Esophagus squamous epithelium (tissue), 5 donors: ENCODE measurements at regions of chr3 and their contacts with region 1.

Region 1: DNA sequence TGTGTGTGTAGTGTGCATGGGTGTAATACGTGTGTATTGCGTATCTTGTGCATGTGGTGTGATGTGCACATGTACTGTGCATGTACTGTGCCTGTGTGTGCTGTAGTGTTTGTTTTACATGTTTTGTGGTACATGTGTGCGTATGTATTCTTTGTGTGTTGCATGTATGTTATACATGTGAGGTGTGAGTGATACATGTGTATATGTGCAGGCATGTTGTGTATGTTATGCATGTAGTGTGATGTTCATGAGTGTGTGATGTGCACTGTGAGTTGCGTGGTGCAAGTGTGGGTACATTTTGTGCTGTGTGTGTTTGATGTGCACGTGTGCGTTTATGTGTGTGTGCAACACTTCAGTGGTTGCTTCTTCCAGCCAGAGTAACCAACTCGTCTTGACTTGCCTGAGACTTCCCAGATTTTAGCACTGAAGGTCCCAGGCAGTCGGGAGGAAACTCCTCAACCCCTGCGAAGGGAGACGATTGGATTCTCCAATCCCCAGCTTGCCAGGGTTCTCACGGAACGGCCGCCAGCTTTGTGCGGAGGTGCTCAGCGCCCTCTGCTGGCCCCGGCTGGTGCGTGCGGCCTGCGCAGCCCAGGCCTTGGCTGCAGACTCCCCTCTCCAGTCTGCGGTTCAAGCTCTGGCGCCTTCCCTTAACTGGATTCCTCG is 3.6 kb downstream of the GALNT15 start:
- DNase-seq: no peak
- H3K4me3 ChIP-seq: peak overlapping the region in 3 of 4 donors; percentile 39 to 66 (median 46)
- H3K27ac ChIP-seq: peak overlapping the region in 3 of 4 donors; percentile 10 to 87 (median 48)
- H3K4me1 ChIP-seq: peaks cover 0 to 55% (median 22%) of the 10 kb centered on the region in 3 donors
- H3K27me3 ChIP-seq: peaks cover 0 to 49% (median 0%) of the 10 kb centered on the region in 4 donors
- CTCF ChIP-seq: peak; percentile 60 to 97 (median 94)
- POLR2A ChIP-seq: no peak

Region 2: DNA sequence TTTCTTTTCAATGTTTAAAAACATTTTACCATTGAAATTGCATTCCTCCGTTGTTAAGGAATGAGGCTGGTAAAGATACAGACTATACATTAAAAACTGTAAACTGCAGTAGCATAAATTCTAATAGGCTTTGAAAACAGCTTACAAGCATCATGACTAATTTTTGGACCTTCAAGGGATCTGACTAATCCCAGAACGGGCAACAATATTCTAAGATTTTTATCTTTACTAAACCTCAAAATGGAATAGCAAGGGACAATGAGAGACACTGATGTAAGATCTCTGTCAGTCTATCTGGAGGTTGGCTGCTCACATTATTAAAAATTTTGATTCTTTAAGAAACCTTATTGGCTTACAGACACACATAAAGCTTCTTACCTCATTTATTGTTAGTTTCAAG is 501.8 kb before region 1 on chr3:
- intact Hi-C with region 1: no loop called
- DNase-seq: no peak
- H3K4me3 ChIP-seq: no peak overlapping the region
- H3K27ac ChIP-seq: no peak overlapping the region
- H3K4me1 ChIP-seq: no peaks in the 10 kb centered on the region
- H3K27me3 ChIP-seq: no peaks in the 10 kb centered on the region
- CTCF ChIP-seq: no peak
- POLR2A ChIP-seq: no peak

Region 3: DNA sequence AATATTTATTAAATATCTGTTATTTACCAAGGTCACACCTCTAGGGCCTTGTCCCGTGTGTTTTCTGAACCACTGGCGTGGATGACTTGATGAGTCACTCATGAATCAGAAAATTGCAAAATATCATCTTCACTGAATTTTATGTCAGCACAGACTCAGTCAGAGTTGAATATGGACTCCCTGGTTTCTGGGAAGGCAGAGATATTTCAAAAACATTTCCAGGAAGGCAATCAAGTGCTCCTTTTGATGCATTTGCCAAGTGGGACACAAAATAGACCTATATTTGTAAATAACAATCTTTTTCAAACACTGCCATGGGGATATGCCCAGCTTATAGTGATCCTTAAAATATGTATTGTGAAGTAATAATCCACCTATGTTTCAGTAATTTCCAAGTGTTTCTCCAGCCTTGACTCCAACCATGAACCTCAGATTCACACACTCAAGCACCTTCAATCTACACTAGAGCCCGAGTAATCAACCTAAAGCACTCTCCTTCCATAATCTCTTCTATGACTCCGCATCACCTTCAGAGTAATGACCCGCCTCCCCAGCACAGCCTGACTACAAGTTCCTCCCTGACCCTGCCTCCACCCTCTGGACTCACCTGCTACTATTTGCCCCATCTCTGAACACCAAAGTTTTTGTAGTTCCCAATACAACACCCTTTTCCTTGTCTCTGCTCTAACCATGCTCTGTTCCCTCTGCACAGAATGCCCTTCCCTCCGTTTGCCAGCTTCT is 62.4 kb after region 1 on chr3:
- intact Hi-C with region 1: loop called (anchors 5 kb)
- DNase-seq: no peak
- H3K4me3 ChIP-seq: no peak overlapping the region
- H3K27ac ChIP-seq: peak overlapping the region in 3 of 4 donors; percentile 51 to 62 (median 61)
- H3K4me1 ChIP-seq: peaks cover 0 to 32% (median 16%) of the 10 kb centered on the region in 3 donors
- H3K27me3 ChIP-seq: peaks cover 0 to 8% (median 0%) of the 10 kb centered on the region in 4 donors
- CTCF ChIP-seq: no peak
- POLR2A ChIP-seq: no peak

Region 4: DNA sequence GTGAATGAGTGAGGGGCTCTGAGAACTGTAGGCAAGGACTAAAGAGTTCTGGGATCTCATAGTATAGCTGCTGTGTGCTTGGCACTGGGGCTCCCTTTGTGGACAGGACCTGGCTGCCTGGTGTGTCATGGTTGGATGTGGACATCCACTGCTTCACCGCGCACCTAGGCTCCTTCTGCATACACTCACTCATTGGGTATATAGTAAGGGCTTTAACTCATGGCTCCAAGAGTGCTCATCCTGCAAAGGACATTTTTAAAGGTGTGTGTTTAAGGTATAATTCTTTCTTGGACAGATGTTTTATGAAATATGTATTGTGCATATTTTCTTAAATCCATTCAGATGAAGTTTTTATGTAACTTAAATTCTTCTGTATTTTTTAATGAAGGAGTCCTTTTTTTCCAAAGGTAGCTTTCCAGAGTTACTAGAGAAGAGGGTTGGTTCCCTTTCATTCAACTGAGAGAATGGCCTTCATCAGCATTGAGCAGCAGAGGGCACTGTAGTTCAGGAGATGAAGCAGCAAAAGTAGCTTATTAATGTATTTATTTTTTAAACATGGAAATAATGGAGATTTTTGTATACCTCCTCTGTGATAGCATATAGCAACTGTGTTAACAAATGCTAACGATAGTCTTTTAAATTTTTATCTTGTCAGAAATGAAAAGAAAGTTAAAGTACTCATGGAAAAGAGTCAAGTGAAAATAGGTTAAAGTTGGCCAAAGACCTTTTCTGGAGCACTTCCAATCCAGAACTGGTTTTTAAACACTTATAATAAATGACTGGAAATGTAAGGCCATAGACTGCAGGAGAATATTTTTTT is 112.1 kb after region 1 on chr3:
- intact Hi-C with region 1: no loop called
- DNase-seq: no peak
- H3K4me3 ChIP-seq: no peak overlapping the region
- H3K27ac ChIP-seq: peak overlapping the region in 1 of 4 donors; percentile 34
- H3K4me1 ChIP-seq: peaks cover 0 to 12% (median 0%) of the 10 kb centered on the region in 3 donors
- H3K27me3 ChIP-seq: no peaks in the 10 kb centered on the region
- CTCF ChIP-seq: peak; percentile 55 to 80 (median 72)
- POLR2A ChIP-seq: no peak

Region 5: DNA sequence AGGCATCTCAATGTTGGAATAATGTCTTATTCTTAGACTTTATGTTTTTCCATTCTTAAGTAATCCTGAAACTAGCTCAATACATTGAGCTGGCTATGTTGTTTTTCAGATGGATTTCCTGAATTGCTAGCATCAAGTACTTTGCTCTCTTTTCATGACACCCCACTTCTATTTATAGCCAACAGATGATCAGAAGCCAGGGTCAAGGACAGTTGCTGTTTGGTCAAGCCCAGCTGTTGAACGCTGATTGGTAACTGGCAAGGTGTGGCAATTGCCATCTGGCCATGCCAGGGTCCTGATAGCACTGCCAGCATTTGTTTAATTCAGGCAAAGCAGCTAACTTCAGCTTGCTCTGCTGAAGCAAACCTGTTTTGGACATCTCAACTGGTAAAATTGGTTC is 660.5 kb after region 1 on chr3:
- intact Hi-C with region 1: no loop called
- DNase-seq: no peak
- H3K4me3 ChIP-seq: no peak overlapping the region
- H3K27ac ChIP-seq: no peak overlapping the region
- H3K4me1 ChIP-seq: peaks cover 0 to 12% (median 3%) of the 10 kb centered on the region in 3 donors
- H3K27me3 ChIP-seq: no peaks in the 10 kb centered on the region
- CTCF ChIP-seq: no peak
- POLR2A ChIP-seq: no peak